ENCODE measurements at regions of chr4 and their contacts with region 1.

Region 1: DNA sequence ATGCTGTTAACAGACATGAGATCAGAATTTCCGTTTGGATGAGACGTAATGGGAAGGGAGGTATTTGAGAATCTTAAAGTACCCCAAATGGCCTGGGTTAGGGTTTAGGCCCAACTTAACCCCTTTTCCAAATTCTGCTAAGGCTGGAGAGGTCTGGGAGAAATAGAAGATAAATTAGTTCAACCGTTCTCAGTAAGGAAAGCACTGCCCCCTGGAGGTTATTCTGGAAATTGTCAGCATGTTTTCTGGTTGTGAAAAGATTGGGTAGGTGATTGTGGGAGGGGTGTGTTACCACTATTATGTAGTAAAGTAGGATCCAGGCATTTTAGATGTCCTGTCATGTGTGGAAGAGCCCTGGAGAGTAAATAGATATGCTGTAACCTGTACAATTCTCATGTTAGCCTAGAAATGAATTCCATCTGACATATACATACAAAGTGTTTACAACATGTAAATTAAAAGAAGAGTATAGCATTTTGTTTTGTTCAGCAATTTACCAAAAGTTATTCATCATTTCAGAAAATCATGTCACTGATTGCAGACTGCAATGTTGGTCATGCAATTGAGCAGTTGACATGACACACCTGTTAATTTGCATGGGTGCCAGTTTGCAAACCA is 26.8 kb upstream of the GRXCR1 start:
- DNase-seq: peak in 1 of 2 donors; percentile 51
- H3K4me3 ChIP-seq: no peak overlapping the region
- CTCF ChIP-seq: peak in 1 of 3 donors; percentile 37
- POLR2A ChIP-seq: no peak

Region 2: DNA sequence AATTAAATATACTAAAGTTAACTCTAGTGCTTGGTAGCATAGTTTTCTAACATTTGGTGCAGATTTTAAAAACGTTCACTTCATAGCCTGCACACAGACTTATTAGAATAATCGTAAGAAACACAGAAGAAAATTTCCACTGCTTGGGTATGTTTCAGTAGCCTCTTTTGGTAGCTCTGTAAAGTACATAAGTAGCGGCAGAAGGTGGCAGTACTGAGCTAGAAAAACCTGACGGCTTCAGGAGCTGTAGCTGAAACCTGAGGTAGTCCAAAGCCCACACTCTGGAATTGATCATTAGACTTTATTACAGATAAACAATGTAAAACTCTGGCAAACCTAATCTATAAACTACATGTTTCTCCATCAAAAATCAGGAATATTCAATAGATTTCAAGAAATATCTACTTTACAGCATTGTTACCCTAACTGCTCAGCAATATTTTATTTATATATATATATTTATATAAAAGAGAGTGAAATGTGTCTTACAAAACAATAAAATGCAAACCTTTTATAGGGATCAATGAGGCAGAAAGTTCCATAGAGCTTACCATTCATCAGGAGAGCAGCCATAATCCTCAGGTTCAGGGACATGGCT is 297.0 kb before region 1 on chr4:
- intact Hi-C with region 1: loop called (anchors 5 kb)
- DNase-seq: peak in 1 of 2 donors; percentile 61
- H3K4me3 ChIP-seq: no peak overlapping the region
- CTCF ChIP-seq: peak in 1 of 3 donors; percentile 36
- POLR2A ChIP-seq: no peak

Region 3: DNA sequence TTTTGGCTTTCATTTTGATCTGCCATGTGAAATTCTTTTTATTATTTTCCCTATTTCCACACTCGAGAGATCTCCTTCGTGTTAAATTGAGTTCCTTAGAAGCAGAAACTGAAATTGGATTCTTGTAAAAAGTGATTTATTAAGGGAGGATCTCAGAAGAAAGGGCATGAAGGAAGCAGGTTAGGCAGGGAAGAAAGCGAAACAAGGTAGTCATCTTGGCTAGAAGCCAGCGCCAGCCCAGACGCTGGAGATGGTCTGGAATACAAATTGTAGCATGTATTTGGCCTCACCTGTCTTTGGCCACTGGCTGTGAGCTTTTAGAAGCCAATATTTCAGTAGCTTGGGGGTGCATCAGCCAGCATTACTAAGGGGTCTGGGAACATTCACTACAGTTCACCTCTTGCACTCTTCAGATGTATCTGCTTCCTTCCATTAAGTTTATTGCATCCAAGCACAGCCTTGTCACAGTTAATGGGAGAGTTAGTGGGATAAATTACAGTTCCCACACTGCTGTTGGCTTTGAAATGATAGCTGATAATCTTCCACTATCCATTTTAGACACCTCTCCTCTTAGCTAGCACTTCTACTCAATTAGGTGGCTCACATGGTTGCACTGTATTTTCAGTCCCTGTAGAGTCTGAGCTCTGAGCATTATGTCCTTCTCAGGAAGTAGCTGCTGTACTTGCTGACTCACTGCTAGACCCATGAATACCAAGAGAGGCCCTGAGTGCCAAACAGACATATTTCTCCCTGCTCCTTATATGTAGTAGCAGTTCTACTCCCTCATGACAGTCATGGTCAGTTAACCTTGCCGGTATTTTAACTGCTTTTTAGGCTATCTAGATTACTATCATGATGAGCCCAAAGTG is 41.4 kb after region 1 on chr4:
- intact Hi-C with region 1: no loop called
- DNase-seq: no peak
- H3K4me3 ChIP-seq: no peak overlapping the region
- CTCF ChIP-seq: no peak
- POLR2A ChIP-seq: no peak

Measured in lower leg skin (tissue), 4 donors.